SK-N-SH (cell line): ENCODE measurements at regions of chr5 and their contacts with region 1.

Region 1: GRCh38 chr5:418681-419121 is 24.3 kb upstream of the EXOC3 start:
- DNase-seq: no peak
- H3K4me3 ChIP-seq: no peak overlapping the region
- H3K27ac ChIP-seq: no peak overlapping the region
- H3K4me1 ChIP-seq: no peaks in the 10 kb centered on the region; a peak in 1 of 4 replicates
- H3K27me3 ChIP-seq: no peaks in the 10 kb centered on the region
- CTCF ChIP-seq: no peak
- EP300 ChIP-seq: no peak
- RAD21 ChIP-seq: no peak

Region 2: GRCh38 chr5:368183-369084 is 50.3 kb before region 1 on chr5:
- CTCF ChIA-PET with region 1: no interaction called
- POLR2A ChIA-PET with region 1: no interaction called
- DNase-seq: no peak
- H3K4me3 ChIP-seq: no peak overlapping the region
- H3K27ac ChIP-seq: no peak overlapping the region
- H3K4me1 ChIP-seq: peaks cover 0 to 5% of the 10 kb centered on the region in 2 experiments; a peak in 1 of 4 replicates
- H3K27me3 ChIP-seq: no peaks in the 10 kb centered on the region
- CTCF ChIP-seq: no peak
- EP300 ChIP-seq: no peak
- RAD21 ChIP-seq: no peak

Region 3: GRCh38 chr5:431001-431710 is 12.5 kb after region 1 on chr5:
- CTCF ChIA-PET with region 1: interaction called, 18 read pairs
- POLR2A ChIA-PET with region 1: no interaction called
- DNase-seq: peak; percentile 93
- H3K4me3 ChIP-seq: no peak overlapping the region; a peak in 1 of 4 replicates
- H3K27ac ChIP-seq: no peak overlapping the region
- H3K4me1 ChIP-seq: peaks cover 0 to 3% of the 10 kb centered on the region in 2 experiments; a peak in 1 of 4 replicates
- H3K27me3 ChIP-seq: no peaks in the 10 kb centered on the region
- CTCF ChIP-seq: peak; percentile 63
- EP300 ChIP-seq: no peak
- RAD21 ChIP-seq: peak; percentile 75

Region 4: GRCh38 chr5:442335-443238 is 23.9 kb after region 1 on chr5 and contains the start of gene EXOC3:
- CTCF ChIA-PET with region 1: no interaction called
- POLR2A ChIA-PET with region 1: no interaction called
- DNase-seq: peak; percentile 99
- H3K4me3 ChIP-seq: peak within 1 kb of the TSS; percentile 77 to 90
- H3K27ac ChIP-seq: peak within 1 kb of the TSS; percentile 36 to 68; a peak in 3 of 4 replicates
- H3K4me1 ChIP-seq: peaks cover 0 to 17% of the 10 kb centered on the region in 2 experiments; a peak in 1 of 4 replicates
- H3K27me3 ChIP-seq: no peaks in the 10 kb centered on the region
- CTCF ChIP-seq: no peak
- EP300 ChIP-seq: no peak; a peak in 1 of 4 replicates
- RAD21 ChIP-seq: no peak
- polyA plus RNA-seq, gene EXOC3: 23.0 and 25.7 TPM in 2 replicates